K562 (cell line): ENCODE measurements at regions of chr22 and their contacts with region 1.

Region 1: GRCh38 chr22:19787441-19788141 is 27.0 kb downstream of the TBX1 start:
- DNase-seq: no peak
- ATAC-seq: peak; percentile 37
- H3K4me3 ChIP-seq: no peak overlapping the region
- H3K27ac ChIP-seq: no peak overlapping the region
- H3K4me1 ChIP-seq: peaks cover 0 to 49% of the 10 kb centered on the region in 2 experiments; a peak in 2 of 5 replicates
- H3K27me3 ChIP-seq: 0 out of 5 replicates have a peak, but pooled peaks cover 0 to 2% of the 10 kb centered on the region in 2 experiments
- CTCF ChIP-seq: peak; percentile 24 to 41 (median 31); a peak in 3 of 6 replicates
- EP300 ChIP-seq: no peak
- POLR2A ChIP-seq: no peak
- RAD21 ChIP-seq: no peak

Region 2: DNA sequence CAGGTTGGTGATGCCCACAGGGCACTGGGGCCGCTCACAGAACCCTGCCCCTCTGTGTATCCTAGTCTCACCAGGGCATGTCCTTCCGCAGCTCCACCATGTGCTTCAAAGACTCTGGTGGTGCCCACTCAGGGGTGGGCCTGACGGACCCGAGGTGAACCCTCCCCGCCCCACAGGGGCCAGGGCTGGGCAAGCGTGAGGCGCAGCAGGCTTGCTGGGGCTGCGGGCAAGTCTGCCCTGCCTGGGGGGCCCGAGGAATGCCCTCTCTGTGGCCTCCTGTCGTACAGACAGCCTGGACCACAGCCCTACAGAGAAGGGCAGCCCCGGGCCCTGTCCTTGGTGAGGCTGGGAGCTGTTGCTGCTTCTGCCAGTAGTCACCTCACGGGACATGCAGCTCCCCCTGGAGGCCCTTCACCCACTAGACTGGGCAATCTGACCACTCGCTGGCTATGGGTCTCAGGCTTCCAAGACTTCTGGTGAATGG is 13.2 kb after region 1 on chr22:
- CTCF ChIA-PET with region 1: no interaction called
- POLR2A ChIA-PET with region 1: interaction called, 25 read pairs
- in situ Hi-C with region 1: no loop called
- intact Hi-C with region 1: no loop called
- DNase-seq: peak in 3 of 4 experiments; percentile 60 to 76 (median 74)
- ATAC-seq: peak; percentile 68
- H3K4me3 ChIP-seq: no peak overlapping the region
- H3K27ac ChIP-seq: no peak overlapping the region
- H3K4me1 ChIP-seq: peaks cover under 1 to 68% of the 10 kb centered on the region in 2 experiments; a peak in 4 of 5 replicates
- H3K27me3 ChIP-seq: no peaks in the 10 kb centered on the region
- CTCF ChIP-seq: peak; percentile 71 to 79 (median 76)
- EP300 ChIP-seq: no peak
- POLR2A ChIP-seq: no peak
- RAD21 ChIP-seq: peak in 1 of 2 experiments; percentile 59; a peak in 2 of 4 replicates

Region 3: DNA sequence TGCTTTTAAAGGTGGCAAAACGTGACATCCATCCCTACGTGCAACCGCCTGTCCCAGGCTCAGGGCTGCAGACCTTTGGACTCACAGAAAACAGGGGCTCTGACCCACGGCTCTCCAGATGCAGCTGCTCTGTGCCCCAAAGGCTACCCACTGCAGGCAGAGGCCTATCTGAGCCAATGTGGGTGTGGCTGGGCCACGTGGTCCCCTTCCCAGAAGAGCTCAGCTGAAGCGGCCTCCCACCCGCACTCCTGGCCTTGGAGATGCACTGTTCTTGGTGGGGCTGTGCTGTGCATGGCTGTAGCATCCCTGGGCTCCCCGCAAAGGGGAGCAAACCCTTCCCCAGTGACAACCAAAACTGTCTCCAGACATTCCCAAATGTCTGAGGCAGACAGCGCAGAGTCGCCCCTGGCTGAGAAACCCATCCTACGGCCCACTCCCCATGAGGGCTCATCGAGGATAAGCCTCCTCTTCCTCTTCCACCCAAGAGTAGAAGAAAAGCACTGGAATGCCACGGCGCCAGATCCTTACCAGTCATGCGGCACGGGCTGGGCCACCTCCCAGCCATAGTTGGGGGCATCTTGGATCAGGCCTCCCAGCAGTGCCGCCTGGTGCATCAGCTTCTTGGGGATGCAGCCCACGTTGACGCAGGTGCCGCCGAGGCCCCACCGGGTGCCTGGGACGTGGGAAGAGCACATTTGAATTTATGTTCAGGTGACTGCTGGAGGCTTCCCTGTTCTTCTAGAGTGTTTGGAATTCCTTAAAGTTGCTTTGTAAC is 130.9 kb after region 1 on chr22:
- CTCF ChIA-PET with region 1: no interaction called
- POLR2A ChIA-PET with region 1: no interaction called
- in situ Hi-C with region 1: no loop called
- intact Hi-C with region 1: no loop called
- DNase-seq: peak; percentile 69 to 84 (median 72)
- ATAC-seq: peak; percentile 80
- H3K4me3 ChIP-seq: no peak overlapping the region
- H3K27ac ChIP-seq: no peak overlapping the region
- H3K4me1 ChIP-seq: peaks cover 0 to 26% of the 10 kb centered on the region in 2 experiments; a peak in 4 of 5 replicates
- H3K27me3 ChIP-seq: no peaks in the 10 kb centered on the region
- CTCF ChIP-seq: no peak
- EP300 ChIP-seq: no peak
- POLR2A ChIP-seq: no peak
- RAD21 ChIP-seq: no peak

Region 4: DNA sequence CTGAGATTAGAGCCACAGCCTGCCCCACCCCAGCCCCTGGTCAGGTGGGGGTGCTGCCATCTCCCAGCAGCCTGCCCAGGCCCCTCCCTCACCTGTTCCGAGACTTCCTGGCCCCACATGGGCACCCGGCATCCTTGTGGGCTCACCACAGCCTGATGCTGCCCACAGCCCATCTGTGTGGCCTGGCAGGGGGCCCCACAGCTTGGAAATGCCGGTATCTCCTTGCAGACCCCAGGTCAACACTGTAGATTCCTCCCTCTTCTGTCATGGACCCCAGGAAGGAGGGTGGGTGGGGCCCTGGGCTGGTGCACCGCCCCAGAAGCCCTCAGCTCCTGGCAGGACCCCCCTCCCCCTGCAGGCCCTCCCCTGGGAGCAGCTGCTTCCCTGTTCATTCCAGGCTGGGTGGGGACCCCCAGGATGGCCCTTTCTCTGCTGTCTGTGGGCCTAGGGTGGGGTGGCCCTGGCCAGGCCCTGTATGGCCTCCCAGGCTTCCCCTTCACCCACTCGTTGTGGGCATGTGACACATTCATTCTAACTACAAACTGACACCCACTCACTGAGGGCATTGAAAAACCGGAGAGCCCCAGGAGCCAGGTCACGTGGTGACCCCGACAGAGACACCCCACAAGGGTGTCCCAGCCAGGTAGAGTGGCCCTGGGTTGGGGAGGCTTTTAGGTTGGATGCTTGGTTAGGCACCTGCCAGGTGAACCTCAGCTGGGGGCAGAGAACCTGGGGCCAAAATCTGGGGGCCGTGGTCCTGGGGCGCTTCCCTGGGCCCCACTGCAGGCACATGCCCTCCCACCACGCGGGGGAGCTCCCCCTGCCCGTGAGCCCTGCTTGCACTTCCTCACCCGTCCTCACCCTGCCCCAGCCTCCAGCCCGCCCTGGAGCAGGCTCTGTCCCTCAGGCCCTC is 407.3 kb after region 1 on chr22:
- CTCF ChIA-PET with region 1: no interaction called
- POLR2A ChIA-PET with region 1: no interaction called
- in situ Hi-C with region 1: no loop called
- intact Hi-C with region 1: no loop called
- DNase-seq: no peak
- ATAC-seq: peak; percentile 27; the same call in 2 of the 3 replicates
- H3K4me3 ChIP-seq: no peak overlapping the region
- H3K27ac ChIP-seq: no peak overlapping the region
- H3K4me1 ChIP-seq: peaks cover 0 to 49% of the 10 kb centered on the region in 2 experiments; a peak in 2 of 5 replicates
- H3K27me3 ChIP-seq: peaks cover 84 to 95% of the 10 kb centered on the region in 2 experiments
- CTCF ChIP-seq: peak; percentile 29 to 57 (median 39); a peak in 5 of 6 replicates
- EP300 ChIP-seq: no peak
- POLR2A ChIP-seq: no peak
- RAD21 ChIP-seq: peak in 1 of 2 experiments; percentile 29; a peak in 1 of 4 replicates